ENCODE measurements at regions of chr17 and their contacts with region 1.

Region 1: GRCh38 chr17:385926-386876 is 33.6 kb upstream of the RPH3AL start:
- DNase-seq: peak; percentile 94

Region 2: DNA sequence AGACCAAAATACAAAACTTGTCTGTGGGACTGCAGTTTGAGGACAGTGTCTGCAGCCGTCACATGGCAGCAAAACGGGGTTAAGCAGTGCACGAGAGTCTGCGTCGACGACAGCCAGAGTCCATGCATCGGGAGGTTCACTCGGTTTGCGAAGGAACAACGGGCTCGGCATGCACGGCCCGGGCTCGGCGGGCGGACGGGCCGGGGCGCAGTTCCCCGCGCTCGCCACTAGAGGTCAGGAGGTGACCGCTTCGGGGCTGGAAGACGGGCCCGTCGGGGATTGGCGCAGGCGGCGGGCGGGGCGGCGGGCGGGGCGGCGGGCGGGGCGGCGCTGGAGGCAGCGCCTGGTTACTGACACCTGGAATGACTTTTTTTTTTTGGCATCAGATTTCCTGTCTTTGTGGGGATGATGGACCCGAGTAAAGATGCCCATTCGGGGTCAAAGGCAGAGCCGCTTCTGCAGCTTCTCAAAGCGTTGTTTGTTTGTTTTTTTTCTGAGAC is 242.4 kb before region 1 on chr17:
- intact Hi-C with region 1: loop called (anchors 2 kb)
- DNase-seq: peak; percentile 91

Region 3: DNA sequence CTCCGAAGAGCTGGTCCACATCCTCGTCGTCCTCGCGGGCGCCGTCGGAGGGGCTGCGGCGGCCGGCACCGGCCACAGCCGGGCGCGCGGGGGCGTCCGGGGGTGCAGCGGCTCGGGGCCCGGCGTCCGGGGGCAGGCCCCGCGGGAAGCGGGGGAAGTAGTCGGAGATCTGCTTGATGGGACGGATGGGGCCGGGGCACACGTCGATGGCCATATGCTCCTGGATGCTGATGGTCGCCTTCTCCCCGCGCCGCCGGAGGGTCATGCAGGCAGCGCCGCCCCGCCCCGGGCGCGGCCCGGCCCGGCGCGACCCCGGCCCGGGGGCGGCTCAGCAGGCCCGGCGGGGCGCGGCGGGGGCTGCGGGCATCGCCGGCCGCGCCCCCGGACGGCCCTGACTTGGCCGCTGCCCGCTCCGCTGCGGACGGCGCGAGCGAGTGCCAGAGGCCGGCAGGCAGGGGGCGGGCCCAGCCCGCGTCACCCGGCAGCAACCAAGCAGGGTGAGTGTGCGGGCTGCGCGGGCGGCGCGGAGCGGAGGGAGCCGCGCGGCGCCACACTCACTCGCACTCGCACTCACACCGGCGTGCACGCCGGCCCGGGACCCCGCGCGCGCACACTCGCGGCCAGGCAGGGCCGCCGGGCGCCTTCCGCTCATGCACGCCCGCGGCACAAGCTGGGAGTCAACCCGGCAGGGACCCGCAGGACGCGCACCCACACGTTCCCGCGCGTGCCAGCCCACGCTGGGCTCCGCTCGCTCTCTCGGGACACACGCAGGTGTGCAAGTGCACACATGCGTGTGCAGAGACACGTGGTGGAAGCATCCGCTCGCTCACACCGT is 204.8 kb before region 1 on chr17 and contains the start of gene DOC2B:
- intact Hi-C with region 1: loop called (anchors 5 kb)
- DNase-seq: peak; percentile 81
- total RNA-seq, gene DOC2B: 6.4 TPM

Region 4: GRCh38 chr17:266701-267667 is 119.2 kb before region 1 on chr17:
- intact Hi-C with region 1: loop called (anchors 5 kb)
- DNase-seq: no peak

Region 5: GRCh38 chr17:333626-334396 is 52.4 kb before region 1 on chr17:
- intact Hi-C with region 1: loop called (anchors 2 kb)
- DNase-seq: peak; percentile 90

Region 6: DNA sequence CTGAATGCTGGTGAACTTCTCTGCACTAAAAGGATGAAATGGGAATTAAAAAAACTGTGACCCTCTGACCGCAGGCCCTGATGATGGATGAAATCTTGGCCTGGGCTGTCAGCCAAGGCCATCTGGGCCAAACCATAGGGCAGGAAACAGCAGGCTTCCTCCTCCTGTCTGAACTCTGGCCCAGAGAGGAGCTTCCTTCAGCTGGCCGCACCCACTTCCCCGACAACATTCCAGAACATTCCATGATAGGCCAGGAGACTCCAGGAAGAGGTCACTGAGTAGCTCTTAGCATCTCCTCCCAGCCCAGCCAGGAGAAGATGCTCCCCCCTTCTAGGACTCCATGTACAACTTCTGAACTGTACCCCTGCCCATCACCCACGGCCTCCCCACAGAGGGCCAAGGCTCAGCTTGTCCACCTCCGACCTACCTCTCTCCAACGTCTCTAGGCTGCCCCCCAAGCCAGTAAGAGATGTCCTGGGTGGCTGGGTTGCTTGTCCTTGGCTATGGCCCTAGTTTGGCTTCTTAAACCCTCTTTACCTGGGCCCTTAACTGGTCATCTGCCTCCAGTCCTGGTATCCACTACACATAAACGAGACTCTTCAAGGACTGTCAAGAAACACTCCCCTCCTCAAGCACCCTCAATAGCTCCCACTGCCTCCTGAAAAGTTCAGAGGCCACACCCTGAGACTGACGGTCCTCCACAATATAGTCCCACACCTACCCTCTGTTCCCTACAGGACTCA is 35.3 kb before region 1 on chr17:
- intact Hi-C with region 1: loop called (anchors 5 kb)
- DNase-seq: peak; percentile 86